HCT116 (cell line): ENCODE measurements at regions of chr14 and their contacts with region 1.

Region 1: GRCh38 chr14:74508292-74508731 is 14.7 kb downstream of the ISCA2 start:
- DNase-seq: no peak
- ATAC-seq: peak; percentile 92
- H3K4me3 ChIP-seq: no peak overlapping the region
- H3K27ac ChIP-seq: no peak overlapping the region
- H3K4me1 ChIP-seq: peaks cover 0 to 19% of the 10 kb centered on the region in 2 experiments; a peak in 2 of 4 replicates
- H3K27me3 ChIP-seq: no peaks in the 10 kb centered on the region
- CTCF ChIP-seq: peak; percentile 76 to 96 (median 90)
- POLR2A ChIP-seq: no peak
- RAD21 ChIP-seq: no peak

Region 2: DNA sequence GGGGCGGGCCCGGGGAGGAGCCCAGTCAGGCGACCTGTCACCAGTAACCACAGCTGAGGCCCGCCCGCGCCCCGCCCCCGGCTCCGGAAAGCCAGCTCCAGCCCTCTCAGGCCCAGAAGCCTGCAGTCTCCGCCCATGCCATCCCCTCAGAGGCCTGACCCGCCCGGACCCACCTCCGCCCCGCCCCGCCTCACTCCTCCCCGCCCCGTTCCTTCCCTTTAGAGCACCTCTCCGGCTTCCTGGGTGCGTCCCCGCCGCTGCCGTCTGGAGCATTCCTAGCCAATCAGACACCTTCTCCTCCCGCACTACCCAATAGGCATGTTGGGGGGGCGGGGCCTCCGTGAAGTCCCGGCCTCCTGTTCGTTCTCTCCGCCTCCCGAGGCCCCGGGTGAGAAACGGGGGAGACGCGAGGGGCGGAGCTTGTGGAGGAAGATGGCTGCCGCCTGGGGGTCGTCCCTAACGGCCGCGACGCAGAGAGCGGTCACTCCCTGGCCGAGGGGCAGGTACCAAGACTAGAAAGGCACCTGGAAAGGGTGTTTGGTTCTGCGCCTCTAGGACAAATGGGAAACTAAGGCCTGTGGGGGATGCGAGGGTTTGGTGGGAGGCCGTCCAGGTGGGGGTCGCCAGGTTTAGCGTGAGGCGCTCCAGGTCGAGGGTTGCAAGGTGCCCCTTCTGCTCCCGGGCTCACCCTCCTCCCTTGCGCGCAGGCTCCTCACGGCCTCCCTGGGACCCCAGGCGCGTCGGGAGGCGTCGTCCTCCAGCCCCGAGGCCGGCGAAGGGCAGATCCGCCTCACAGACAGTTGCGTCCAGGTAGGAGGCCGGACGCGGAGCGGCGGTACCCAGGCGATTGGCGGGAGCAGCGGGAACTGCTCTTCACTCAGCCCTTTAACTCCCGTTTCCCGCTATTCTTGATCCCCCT is 14.7 kb before region 1 on chr14 and contains the start of gene ISCA2:
- CTCF ChIA-PET with region 1: interaction called, 11 read pairs
- POLR2A ChIA-PET with region 1: no interaction called
- RAD21 ChIA-PET with region 1: no interaction called
- intact Hi-C with region 1: no loop called
- DNase-seq: peak; percentile 97
- ATAC-seq: peak; percentile 90
- H3K4me3 ChIP-seq: peak within 1 kb of the TSS; percentile 86 to 94
- H3K27ac ChIP-seq: peak within 1 kb of the TSS; percentile 78
- H3K4me1 ChIP-seq: peaks cover 39 to 51% of the 10 kb centered on the region in 2 experiments
- H3K27me3 ChIP-seq: no peaks in the 10 kb centered on the region
- CTCF ChIP-seq: no peak
- POLR2A ChIP-seq: no peak
- RAD21 ChIP-seq: no peak
- total RNA-seq, gene ISCA2: 27.5 TPM

Region 3: DNA sequence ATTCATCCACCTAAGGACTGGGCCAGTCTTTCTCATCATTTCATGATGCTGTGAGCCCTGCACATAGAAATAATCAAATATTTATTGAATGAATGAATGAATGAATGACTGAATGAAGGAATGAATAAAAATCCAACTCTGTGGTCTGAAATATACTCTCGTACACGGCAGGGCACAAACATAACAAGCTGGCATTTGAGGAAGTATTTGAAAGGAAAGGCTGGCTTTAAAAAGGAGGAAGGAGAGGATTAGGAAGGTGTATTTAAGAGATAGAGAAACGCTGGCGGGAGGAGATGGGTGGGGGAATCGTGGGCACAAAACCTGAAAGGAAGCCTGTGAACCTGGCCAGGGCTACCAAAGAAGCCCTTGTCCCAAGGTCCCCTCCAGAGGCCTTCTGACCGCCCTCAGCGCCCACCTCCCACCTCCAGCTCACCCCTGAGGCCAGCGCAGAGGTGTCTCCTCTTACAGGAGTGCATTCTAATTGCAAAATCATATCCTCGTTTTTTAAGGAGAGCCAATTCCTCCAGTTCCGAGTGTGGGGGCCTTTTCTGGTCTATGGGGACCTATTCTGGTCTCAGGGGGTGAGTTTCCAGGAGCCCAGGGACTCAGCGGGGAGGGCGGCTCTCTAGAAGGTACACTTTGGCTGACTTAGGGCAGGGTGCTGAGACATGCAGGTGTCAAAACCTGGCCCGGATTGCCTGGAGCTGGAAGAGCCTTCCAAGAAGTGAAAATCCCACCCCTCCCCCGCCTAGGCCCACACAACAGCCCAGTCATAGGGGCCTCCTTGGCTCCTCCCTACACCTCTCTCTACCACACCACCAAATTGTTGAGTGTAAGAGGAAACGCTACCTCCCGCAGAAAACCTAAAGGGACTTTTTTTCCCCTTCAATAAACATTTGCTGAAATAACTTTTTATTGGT is 910.8 kb after region 1 on chr14:
- CTCF ChIA-PET with region 1: no interaction called
- POLR2A ChIA-PET with region 1: no interaction called
- RAD21 ChIA-PET with region 1: no interaction called
- intact Hi-C with region 1: no loop called
- DNase-seq: peak; percentile 58
- ATAC-seq: peak; percentile 93
- H3K4me3 ChIP-seq: peak overlapping the region in 1 of 2 experiments; percentile 15; a peak in 1 of 4 replicates
- H3K27ac ChIP-seq: no peak overlapping the region
- H3K4me1 ChIP-seq: peaks cover 8 to 10% of the 10 kb centered on the region in 2 experiments; a peak in 3 of 4 replicates
- H3K27me3 ChIP-seq: no peaks in the 10 kb centered on the region
- CTCF ChIP-seq: no peak
- POLR2A ChIP-seq: no peak
- RAD21 ChIP-seq: no peak